Panc1 (cell line): ENCODE measurements at regions of chr15 and their contacts with region 1.

Region 1: GRCh38 chr15:96321639-96322535 is 8.6 kb upstream of the NR2F2 start:
- DNase-seq: no peak
- ATAC-seq: peak; percentile 59
- H3K4me3 ChIP-seq: peak overlapping the region; percentile 45 to 50
- H3K27ac ChIP-seq: peak overlapping the region; percentile 78
- H3K4me1 ChIP-seq: peaks cover 53% of the 10 kb centered on the region
- H3K27me3 ChIP-seq: no peaks in the 10 kb centered on the region
- CTCF ChIP-seq: peak; percentile 50

Region 2: GRCh38 chr15:96047255-96047931 is 274.5 kb before region 1 on chr15:
- CTCF ChIA-PET with region 1: interaction called, 10 read pairs
- POLR2A ChIA-PET with region 1: no interaction called
- in situ Hi-C with region 1: no loop called
- intact Hi-C with region 1: loop called (anchors 10 kb)
- DNase-seq: no peak
- ATAC-seq: peak; percentile 87
- H3K4me3 ChIP-seq: peak overlapping the region in 1 of 2 experiments; percentile 17; a peak in 2 of 4 replicates
- H3K27ac ChIP-seq: peak overlapping the region; percentile 46
- H3K4me1 ChIP-seq: peaks cover 14% of the 10 kb centered on the region
- H3K27me3 ChIP-seq: no peaks in the 10 kb centered on the region
- CTCF ChIP-seq: no peak

Region 3: GRCh38 chr15:96187341-96188305 is 134.3 kb before region 1 on chr15:
- CTCF ChIA-PET with region 1: no interaction called
- POLR2A ChIA-PET with region 1: no interaction called
- in situ Hi-C with region 1: no loop called
- intact Hi-C with region 1: no loop called
- DNase-seq: no peak
- ATAC-seq: no peak
- H3K4me3 ChIP-seq: no peak overlapping the region
- H3K27ac ChIP-seq: no peak overlapping the region
- H3K4me1 ChIP-seq: no peaks in the 10 kb centered on the region
- H3K27me3 ChIP-seq: no peaks in the 10 kb centered on the region
- CTCF ChIP-seq: no peak